Right ventricle myocardium superior (tissue), 1 donor: ENCODE measurements at regions of chr18 and their contacts with region 1.

Region 1: DNA sequence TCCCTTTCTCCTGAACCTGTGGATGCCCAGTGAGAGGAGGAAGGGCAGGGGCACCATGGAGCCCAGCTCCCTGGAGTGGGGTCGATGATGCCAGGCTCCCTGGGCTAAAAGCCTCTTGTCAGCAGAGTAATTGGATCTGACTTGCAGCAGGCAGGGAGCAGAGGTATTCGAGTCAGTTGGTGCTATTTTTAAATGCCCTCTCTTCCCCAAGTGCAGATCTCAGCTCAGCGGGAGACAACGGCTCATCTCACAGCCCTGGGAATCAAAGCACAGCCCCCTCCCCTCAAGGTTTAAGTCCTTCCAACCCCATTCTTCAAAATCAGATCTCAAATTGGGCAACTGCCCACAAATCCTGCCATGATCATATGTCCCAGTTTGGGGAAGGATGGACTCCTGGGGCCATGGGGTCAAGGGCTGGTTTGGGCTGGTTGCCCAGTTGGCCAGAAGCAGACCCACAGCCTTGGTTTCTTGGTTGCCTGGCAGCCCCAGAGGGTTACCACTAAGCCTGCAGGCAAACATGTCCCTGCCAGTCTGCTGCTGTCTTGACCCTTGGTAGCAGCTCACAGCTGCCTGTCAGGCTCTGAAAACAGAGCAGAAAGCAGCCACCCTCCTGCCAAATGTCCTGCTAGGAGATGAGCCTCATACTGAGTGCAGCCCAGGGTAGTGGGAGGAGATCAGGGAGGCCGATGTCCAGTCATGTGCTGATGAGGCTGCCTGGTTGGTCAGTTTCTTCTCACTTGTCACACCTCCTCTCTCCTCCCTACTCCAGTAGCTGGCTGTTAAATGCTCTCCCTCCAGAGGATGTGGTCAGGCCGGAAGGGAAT is 244.9 kb downstream of the LOXHD1 start:
- DNase-seq: peak; percentile 59
- ATAC-seq: peak; percentile 81

Region 2: DNA sequence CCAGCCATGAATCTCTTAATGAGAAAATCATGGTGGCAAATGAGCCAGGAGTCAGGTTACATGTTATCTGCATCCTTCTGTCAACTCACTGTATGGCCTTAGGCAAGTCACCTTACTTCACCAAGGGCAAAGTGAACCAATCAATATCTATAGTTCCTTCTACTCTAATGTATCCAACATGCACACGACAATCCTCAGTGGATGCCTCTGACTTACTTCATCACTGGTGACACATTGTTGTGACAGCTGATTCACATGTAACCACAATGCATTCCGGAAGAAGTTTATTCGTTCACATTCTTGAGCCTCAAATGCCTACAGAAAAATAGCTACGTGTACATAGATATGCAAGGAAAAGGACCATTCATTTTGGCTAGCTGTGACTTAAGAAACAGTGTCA is 418.7 kb before region 1 on chr18:
- intact Hi-C with region 1: no loop called
- DNase-seq: no peak
- ATAC-seq: no peak

Region 3: DNA sequence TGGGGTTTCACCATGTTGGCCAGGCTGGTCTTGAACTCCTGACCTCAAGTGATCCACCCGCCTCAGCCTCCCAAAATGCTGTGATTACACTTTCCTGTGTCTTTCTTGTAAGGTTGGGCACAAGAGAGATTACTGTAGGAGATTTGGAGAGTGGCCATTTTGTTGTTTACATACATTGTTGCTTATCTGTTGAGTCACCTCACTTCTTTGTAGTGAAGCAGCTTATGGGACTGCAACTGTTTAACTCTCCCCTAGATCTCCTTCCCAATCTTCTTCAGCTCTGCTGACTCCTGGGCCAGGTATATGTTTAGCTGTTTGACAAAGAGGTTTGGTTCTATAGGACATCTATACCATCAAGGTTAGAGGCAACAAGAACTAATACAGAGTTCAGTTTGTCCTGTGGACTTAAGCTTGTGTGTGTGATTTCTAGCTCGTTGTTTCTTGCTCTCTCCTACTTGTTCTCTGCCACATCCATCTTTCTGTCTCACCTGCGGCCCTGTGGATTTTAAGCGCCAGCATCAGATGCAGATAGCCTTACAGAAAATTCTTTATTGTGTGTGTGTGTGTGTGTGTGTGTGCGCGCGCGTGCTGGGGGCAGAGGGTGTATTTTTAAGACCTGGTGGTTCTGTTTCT is 212.4 kb before region 1 on chr18:
- intact Hi-C with region 1: no loop called
- DNase-seq: no peak
- ATAC-seq: no peak

Region 4: DNA sequence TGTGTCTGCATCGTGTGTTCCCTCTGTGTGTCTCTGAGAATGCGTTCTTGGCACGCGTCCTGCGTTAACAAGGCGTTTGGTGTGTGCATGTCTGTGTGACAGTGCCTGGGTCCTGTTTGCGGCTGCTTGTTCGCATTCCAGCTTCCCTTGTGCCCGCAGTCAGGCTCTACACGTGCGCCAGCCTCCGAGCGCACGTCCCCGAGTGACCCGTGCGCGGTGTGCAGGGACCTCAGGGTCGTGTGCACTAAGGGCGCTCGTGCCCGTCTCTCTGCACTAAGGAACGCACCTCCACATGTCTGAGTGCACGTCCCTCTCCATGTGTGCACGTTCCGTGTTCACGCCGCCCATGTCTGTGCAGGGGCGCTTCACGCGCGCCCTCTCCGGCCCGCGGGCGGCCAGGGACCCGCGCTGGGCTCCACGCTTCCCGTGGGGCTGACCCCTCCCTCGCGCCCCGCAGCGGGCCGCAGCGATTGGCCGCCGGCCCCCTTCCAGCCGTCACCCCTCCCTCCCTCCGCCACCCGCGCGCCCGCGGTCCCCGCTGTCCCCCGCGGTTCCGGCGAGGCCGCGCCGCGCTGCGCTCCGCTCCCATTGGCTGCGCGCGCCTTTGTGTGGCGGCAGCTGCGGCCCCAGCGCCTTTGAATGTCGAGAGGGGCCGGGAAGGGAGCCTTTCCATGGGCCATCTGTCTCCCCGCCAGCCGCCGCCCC is 78.5 kb before region 1 on chr18:
- intact Hi-C with region 1: loop called (anchors 5 kb)
- DNase-seq: peak; percentile 66
- ATAC-seq: peak; percentile 87

Region 5: DNA sequence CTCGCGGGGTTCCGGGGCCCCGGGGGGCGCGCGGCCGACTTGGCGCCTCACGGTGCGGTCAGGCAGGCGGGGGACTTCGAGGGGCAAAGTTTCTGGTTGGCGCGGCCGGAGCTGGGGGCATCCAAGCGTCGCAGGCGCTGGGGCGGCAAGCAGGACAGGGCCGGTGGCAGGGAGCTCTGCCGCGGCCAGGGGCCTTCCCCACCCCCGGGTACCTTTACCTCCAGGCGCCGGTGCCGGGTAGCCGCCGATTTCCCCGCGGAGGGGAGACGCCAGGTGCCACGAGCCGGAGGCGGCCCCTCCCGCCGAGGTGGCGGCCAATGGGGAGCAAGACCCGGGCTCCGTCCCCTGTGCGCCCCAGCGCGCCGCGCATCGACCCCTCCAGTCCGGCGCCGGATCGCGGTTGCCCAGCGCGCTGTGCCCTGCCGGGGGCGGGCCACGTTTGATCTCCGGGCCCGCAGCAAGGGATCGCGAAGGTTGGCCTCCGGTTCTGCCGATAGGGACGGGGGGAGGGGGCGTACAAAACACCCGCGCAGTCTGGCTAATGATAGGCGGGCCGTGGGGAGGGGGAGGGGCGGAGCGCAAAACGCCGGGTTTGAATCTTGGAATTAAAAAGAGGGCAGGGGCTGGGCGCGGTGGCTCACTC is 344.6 kb after region 1 on chr18 and contains the start of gene ST8SIA5:
- intact Hi-C with region 1: no loop called
- DNase-seq: no peak
- ATAC-seq: peak; percentile 52
- total RNA-seq, gene ST8SIA5: 1.5 TPM